ENCODE measurements at regions of chr2 and their contacts with region 1.

Region 1: GRCh38 chr2:12709207-12709522 is 7.6 kb upstream of the TRIB2 start:
- DNase-seq: no peak
- ATAC-seq: no peak
- H3K4me3 ChIP-seq: no peak overlapping the region
- H3K27ac ChIP-seq: peak overlapping the region in 1 of 12 donors; percentile 48
- H3K4me1 ChIP-seq: peaks cover 0 to 18% (median under 1%) of the 10 kb centered on the region in 12 donors
- H3K27me3 ChIP-seq: no peaks in the 10 kb centered on the region
- CTCF ChIP-seq: no peak
- POLR2A ChIP-seq: no peak

Region 2: GRCh38 chr2:12665334-12665733 is 43.8 kb before region 1 on chr2:
- intact Hi-C with region 1: loop called in 2 of 10 experiments (anchors 2 to 5 kb)
- DNase-seq: peak in 3 of 5 donors; percentile 24 to 34 (median 31)
- ATAC-seq: peak; percentile 17 to 89 (median 81)
- H3K4me3 ChIP-seq: no peak overlapping the region
- H3K27ac ChIP-seq: peak overlapping the region in 4 of 12 donors; percentile 0 to 39 (median 30)
- H3K4me1 ChIP-seq: peaks cover 0 to 29% (median 14%) of the 10 kb centered on the region in 12 donors
- H3K27me3 ChIP-seq: no peaks in the 10 kb centered on the region
- CTCF ChIP-seq: no peak
- POLR2A ChIP-seq: no peak

Measured in heart left ventricle (tissue), 16 donors.